CD4-positive, alpha-beta T cell (primary cell): ENCODE measurements at regions of chr22 and their contacts with region 1.

Region 1: DNA sequence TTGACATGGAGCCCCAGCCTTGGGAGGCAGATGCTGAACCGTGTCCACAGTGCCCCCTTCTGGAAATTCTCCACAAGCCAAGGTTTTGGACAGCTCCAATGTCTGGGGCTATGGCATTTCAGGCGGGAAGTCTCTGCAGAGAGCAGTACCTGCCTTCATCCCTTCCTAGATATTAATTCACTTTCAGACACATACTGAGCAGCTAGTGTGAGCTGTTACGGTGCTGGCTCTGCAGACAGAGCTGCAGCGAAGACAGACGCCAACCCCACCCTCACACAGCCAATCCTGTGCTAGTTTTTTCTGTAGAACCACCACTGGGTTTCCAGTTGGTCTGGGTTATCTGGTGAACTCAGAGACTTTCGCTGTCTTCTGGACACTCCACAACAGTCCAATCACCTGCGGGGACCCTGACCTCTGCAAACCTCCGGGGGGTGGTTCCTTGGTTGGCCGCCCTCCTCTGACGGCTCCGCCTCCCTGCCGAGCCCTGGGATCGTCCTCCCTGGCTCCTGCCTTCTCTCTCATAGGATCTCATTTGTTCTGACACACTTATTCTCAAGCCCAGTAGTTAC is 9.1 kb downstream of the LMF2 start:
- DNase-seq: peak; percentile 52 to 84 (median 64)
- ATAC-seq: peak; percentile 97
- H3K4me3 ChIP-seq: no peak overlapping the region
- H3K4me3 Mint-ChIP-seq: no peak overlapping the region
- H3K27ac ChIP-seq: no peak overlapping the region
- H3K27ac Mint-ChIP-seq: no peak overlapping the region
- H3K4me1 ChIP-seq: peaks cover 5% of the 10 kb centered on the region
- H3K4me1 Mint-ChIP-seq: peaks cover 9% of the 10 kb centered on the region
- H3K27me3 ChIP-seq: no peaks in the 10 kb centered on the region
- H3K27me3 Mint-ChIP-seq: no peaks in the 10 kb centered on the region
- CTCF ChIP-seq: peak; percentile 79

Region 2: DNA sequence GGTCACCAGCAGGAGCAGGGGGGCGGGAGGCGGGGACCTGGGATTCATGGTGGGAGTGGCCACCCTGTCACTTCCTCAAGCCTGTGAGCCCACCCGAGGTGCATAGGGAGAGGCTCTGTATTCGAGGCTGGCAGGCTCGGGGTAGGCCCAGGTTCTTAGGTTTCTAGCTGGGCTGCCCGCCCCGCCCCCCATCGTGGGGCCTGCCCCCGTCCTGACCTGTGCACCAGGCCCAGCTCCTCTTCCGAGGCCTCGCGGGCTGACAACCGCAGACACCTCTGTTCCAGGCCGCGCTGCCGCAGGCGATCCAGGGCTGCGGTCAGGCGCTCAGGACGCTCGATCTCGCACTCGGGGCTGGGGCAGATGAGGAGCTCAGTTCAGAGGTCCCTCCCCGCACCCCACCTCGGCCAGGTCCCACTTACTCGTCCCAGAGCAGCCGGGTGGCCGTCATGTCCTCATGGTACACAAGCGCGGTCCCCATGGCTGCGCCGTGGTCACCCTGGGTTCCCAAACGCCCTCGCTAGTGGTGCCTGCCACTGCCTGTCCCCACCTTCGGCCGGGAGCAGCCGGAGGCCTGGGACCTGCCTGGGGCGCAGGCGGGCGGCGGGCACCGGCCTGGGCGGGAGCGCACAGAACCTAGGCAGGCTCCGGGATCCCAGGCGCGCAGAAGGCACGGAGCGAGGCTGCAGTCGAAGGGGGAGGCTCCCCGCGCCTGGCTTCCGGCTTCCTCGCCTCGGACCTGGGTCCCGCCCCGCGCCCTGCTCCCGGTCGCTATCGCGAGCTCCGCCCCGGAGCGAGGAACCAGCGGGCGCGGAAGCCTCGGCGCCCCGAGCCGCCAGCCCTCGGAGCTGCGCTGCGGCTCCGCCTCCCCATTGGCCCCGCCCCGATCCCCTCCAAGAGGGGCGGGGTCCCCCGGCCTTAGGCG is 247.6 kb before region 1 on chr22 and contains the start of gene HDAC10:
- CTCF ChIA-PET with region 1: no interaction called
- POLR2A ChIA-PET with region 1: no interaction called
- intact Hi-C with region 1: loop called (anchors 1 to 5 kb)
- DNase-seq: peak; percentile 60 to 91 (median 77)
- ATAC-seq: peak; percentile 79
- H3K4me3 ChIP-seq: peak within 1 kb of the TSS; percentile 87
- H3K4me3 Mint-ChIP-seq: peak within 1 kb of the TSS; percentile 84
- H3K27ac ChIP-seq: peak within 1 kb of the TSS in 1 of 2 donors; percentile 53
- H3K27ac Mint-ChIP-seq: peak within 1 kb of the TSS; percentile 55
- H3K4me1 ChIP-seq: peaks cover 57% of the 10 kb centered on the region
- H3K4me1 Mint-ChIP-seq: peaks cover 26% of the 10 kb centered on the region
- H3K27me3 ChIP-seq: no peaks in the 10 kb centered on the region
- H3K27me3 Mint-ChIP-seq: no peaks in the 10 kb centered on the region
- CTCF ChIP-seq: no peak
- total RNA-seq, gene HDAC10: 87.3 to 88.7 TPM

Region 3: DNA sequence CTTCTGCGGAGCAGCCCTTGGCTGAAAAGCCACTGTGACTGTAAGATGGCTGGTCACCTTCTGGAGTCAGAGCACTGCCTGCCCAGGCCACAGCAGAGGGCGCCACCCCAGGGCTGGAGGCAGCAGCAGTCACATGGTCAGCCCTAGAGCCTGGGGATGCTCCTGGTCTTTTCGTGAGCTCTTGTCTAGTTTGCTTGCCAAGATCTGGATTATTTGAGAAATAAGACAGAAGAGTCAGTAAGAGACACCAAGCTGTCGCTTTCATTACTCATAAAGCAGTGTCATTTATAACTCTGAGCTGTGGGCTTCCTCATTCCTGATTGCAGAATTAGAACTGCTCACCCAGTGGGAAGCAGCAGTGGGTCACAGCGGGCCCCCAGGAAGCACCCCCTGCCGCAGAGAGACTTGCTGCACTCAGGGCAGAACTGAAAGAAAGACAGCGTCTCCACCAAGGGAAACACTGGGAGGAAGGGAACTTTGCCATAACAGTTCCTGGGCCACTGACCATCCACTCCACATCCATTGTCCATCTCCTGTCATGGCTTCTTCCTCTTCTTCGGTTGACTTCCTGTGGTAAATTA is 98.6 kb before region 1 on chr22:
- CTCF ChIA-PET with region 1: no interaction called
- POLR2A ChIA-PET with region 1: no interaction called
- intact Hi-C with region 1: loop called in 1 of 2 experiments (anchors 5 kb)
- DNase-seq: peak in 10 of 14 experiments; percentile 7 to 61 (median 18)
- ATAC-seq: no peak
- H3K4me3 ChIP-seq: no peak overlapping the region
- H3K4me3 Mint-ChIP-seq: no peak overlapping the region
- H3K27ac ChIP-seq: peak overlapping the region; percentile 5 to 30
- H3K27ac Mint-ChIP-seq: peak overlapping the region; percentile 80
- H3K4me1 ChIP-seq: peaks cover 20% of the 10 kb centered on the region
- H3K4me1 Mint-ChIP-seq: peaks cover 14% of the 10 kb centered on the region
- H3K27me3 ChIP-seq: no peaks in the 10 kb centered on the region
- H3K27me3 Mint-ChIP-seq: no peaks in the 10 kb centered on the region
- CTCF ChIP-seq: no peak

Region 4: DNA sequence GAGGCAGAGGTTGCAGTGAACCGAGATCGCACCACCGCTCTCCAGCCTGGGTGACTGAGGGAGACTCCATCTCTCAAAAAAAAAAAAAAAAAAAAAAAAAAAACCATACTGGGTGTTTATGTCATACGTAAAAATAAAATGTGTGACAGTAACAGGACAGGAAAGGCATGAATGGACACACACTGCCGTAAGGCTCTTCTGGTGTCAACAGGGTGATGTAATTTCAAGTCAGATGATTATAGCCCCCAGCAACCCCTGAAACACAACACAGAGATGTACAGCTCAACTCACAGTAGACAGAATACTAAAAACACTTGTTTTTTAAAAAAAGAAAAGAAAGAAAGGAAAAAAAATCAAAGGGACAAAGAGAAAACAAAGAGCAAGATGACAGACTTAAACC is 45.8 kb before region 1 on chr22:
- CTCF ChIA-PET with region 1: no interaction called
- POLR2A ChIA-PET with region 1: interaction called, 5 read pairs
- intact Hi-C with region 1: loop called in 1 of 2 experiments (anchors 5 kb)
- DNase-seq: no peak
- ATAC-seq: no peak
- H3K4me3 ChIP-seq: no peak overlapping the region
- H3K4me3 Mint-ChIP-seq: no peak overlapping the region
- H3K27ac ChIP-seq: no peak overlapping the region
- H3K27ac Mint-ChIP-seq: peak overlapping the region; percentile 30
- H3K4me1 ChIP-seq: peaks cover 2% of the 10 kb centered on the region
- H3K4me1 Mint-ChIP-seq: no peaks in the 10 kb centered on the region
- H3K27me3 ChIP-seq: no peaks in the 10 kb centered on the region
- H3K27me3 Mint-ChIP-seq: no peaks in the 10 kb centered on the region
- CTCF ChIP-seq: no peak

Region 5: DNA sequence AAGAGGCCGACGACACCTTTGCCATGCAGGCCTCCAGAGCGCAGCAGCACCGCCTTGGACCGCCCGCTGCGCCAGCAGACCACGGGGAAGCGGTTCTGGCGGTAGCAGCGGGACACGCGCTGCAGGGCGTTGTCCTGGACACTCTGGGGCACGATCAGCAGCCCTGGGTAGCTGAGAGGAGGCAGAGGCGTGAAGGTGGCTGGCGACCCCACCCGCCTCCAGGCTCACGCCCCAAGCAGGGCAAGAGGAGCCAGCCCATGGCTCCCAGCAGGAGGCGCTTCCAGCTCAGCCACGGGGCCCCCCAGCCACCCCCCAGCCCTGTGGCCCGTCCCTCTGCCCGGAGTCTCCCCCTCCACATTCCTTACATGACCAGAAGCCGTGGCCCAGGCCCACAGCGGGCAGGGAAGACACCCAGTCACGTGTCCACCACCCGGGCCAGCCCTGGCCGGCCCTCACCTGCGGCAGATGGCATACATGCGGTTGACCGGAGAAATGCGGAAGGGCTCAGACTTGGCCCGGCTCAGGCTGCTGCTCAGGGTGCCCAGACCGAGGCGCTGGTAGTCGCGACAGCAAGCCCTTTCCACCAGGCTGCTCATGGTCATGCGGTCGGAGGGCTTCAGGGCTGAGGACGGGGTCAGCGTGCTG is 38.8 kb before region 1 on chr22:
- CTCF ChIA-PET with region 1: interaction called, 3 read pairs
- POLR2A ChIA-PET with region 1: interaction called, 4 read pairs
- intact Hi-C with region 1: loop called (anchors 2 to 5 kb)
- DNase-seq: peak in 2 of 14 experiments; percentile 37 to 52
- ATAC-seq: peak; percentile 42
- H3K4me3 ChIP-seq: no peak overlapping the region
- H3K4me3 Mint-ChIP-seq: no peak overlapping the region
- H3K27ac ChIP-seq: no peak overlapping the region
- H3K27ac Mint-ChIP-seq: no peak overlapping the region
- H3K4me1 ChIP-seq: peaks cover 2% of the 10 kb centered on the region
- H3K4me1 Mint-ChIP-seq: no peaks in the 10 kb centered on the region
- H3K27me3 ChIP-seq: no peaks in the 10 kb centered on the region
- H3K27me3 Mint-ChIP-seq: no peaks in the 10 kb centered on the region
- CTCF ChIP-seq: no peak